GM12878 (cell line): ENCODE measurements at regions of chr5 and their contacts with region 1.

Region 1: DNA sequence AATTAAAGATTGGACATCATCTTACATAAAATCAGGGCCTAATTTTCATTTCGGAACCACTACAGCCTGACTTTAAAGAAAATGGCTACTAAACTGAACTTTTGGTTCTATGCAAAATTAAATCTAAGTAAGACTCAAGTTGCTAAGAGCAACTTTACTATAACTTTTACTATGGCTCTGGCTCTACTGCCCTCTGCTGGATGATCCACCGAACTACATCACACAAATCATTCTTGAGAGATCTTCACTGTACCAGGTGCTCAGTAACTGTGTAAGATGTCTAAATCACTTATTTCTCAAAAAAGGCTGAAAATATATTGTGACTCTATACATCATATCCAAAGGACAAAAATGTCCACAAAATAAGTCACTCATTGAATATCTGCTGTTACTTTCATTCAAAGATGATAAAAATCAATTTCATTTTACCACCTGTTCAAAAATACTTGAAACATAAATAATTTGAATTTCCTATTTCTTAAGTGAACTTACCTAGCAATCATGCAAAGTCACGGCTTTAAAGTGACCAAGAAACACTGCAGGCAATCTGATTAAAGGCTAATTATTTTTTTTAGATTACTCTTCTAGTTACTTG is 13.5 kb downstream of the MOCS2 start:
- DNase-seq: peak; percentile 11
- ATAC-seq: peak; percentile 87
- H3K4me3 ChIP-seq: no peak overlapping the region
- H3K27ac ChIP-seq: no peak overlapping the region
- H3K4me1 ChIP-seq: no peaks in the 10 kb centered on the region
- H3K27me3 ChIP-seq: no peaks in the 10 kb centered on the region
- CTCF ChIP-seq: peak; percentile 73 to 79 (median 76)
- EP300 ChIP-seq: no peak
- POLR2A ChIP-seq: no peak
- RAD21 ChIP-seq: peak; percentile 80

Region 2: GRCh38 chr5:52787600-52788504 is 308.2 kb before region 1 on chr5 and contains the starts of genes ITGA1 and PELO:
- CTCF ChIA-PET with region 1: interaction called, 3 read pairs
- POLR2A ChIA-PET with region 1: no interaction called
- RAD21 ChIA-PET with region 1: no interaction called
- SMC1A ChIA-PET with region 1: no interaction called
- in situ Hi-C with region 1: loop called (anchors 10 kb)
- intact Hi-C with region 1: loop called (anchors 5 kb)
- DNase-seq: no peak
- ATAC-seq: peak; percentile 88
- H3K4me3 ChIP-seq: peak within 1 kb of the TSS; percentile 76
- H3K27ac ChIP-seq: no peak within 1 kb of the TSS
- H3K4me1 ChIP-seq: no peaks in the 10 kb centered on the region; the same call in 1 of the 2 replicates
- H3K27me3 ChIP-seq: peaks cover 7 to 11% of the 10 kb centered on the region in 2 experiments; a peak in 3 of 4 replicates
- CTCF ChIP-seq: peak in 1 of 3 experiments; percentile 34; a peak in 2 of 6 replicates
- EP300 ChIP-seq: peak in 1 of 2 experiments; percentile 50; a peak in 1 of 4 replicates
- POLR2A ChIP-seq: no peak
- RAD21 ChIP-seq: no peak
- polyA plus RNA-seq, gene ITGA1: 0.02 to 0.04 TPM
- polyA plus RNA-seq, gene PELO: 6.0 to 6.3 TPM

Region 3: GRCh38 chr5:52799983-52800393 is 296.0 kb before region 1 on chr5:
- CTCF ChIA-PET with region 1: no interaction called
- POLR2A ChIA-PET with region 1: no interaction called
- RAD21 ChIA-PET with region 1: no interaction called
- SMC1A ChIA-PET with region 1: no interaction called
- in situ Hi-C with region 1: loop called (anchors 10 kb)
- intact Hi-C with region 1: no loop called
- DNase-seq: peak; percentile 83
- ATAC-seq: peak; percentile 93
- H3K4me3 ChIP-seq: peak overlapping the region; percentile 90
- H3K27ac ChIP-seq: peak overlapping the region; percentile 87
- H3K4me1 ChIP-seq: peaks cover 3% of the 10 kb centered on the region; the same call in 1 of the 2 replicates
- H3K27me3 ChIP-seq: no peaks in the 10 kb centered on the region
- CTCF ChIP-seq: no peak
- EP300 ChIP-seq: no peak
- POLR2A ChIP-seq: peak; percentile 77
- RAD21 ChIP-seq: no peak

Region 4: DNA sequence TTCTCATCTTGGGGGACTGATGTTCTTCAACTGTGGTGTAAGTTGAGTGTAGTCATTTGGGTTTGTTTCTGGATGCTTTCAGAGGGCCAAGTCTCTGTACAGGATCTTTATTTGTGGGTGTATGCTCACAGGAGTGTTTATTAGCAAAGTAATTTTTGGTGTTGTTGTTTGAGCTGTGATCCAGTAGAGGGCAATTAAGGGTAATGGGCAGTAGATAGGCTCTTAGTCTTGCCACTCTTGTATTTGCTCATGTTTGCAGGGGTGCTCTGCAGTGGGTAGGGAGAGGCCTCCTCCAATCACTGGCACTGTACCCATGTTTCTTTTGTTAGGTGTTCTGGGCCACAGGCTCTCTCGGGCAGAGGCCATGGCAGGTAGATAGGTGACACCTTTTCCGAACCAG is 152.7 kb before region 1 on chr5:
- CTCF ChIA-PET with region 1: interaction called, 127 read pairs
- POLR2A ChIA-PET with region 1: interaction called, 6 read pairs
- RAD21 ChIA-PET with region 1: interaction called, 49 read pairs
- SMC1A ChIA-PET with region 1: interaction called, 51 read pairs
- in situ Hi-C with region 1: loop called (anchors 5 kb)
- intact Hi-C with region 1: loop called (anchors 1 kb)
- DNase-seq: no peak
- ATAC-seq: peak; percentile 73
- H3K4me3 ChIP-seq: no peak overlapping the region
- H3K27ac ChIP-seq: no peak overlapping the region
- H3K4me1 ChIP-seq: no peaks in the 10 kb centered on the region
- H3K27me3 ChIP-seq: no peaks in the 10 kb centered on the region
- CTCF ChIP-seq: peak in 2 of 3 experiments; percentile 9 to 19; a peak in 2 of 6 replicates
- EP300 ChIP-seq: no peak
- POLR2A ChIP-seq: no peak
- RAD21 ChIP-seq: no peak

Region 5: GRCh38 chr5:53109443-53110127 is 13.6 kb after region 1 on chr5 and contains the start of gene MOCS2:
- CTCF ChIA-PET with region 1: interaction called, 38 read pairs
- POLR2A ChIA-PET with region 1: interaction called, 5 read pairs
- RAD21 ChIA-PET with region 1: interaction called, 5 read pairs
- SMC1A ChIA-PET with region 1: interaction called, 12 read pairs
- in situ Hi-C with region 1: no loop called
- intact Hi-C with region 1: no loop called
- DNase-seq: peak; percentile 64
- ATAC-seq: peak; percentile 99
- H3K4me3 ChIP-seq: peak within 1 kb of the TSS; percentile 68
- H3K27ac ChIP-seq: peak within 1 kb of the TSS; percentile 65
- H3K4me1 ChIP-seq: peaks cover 5% of the 10 kb centered on the region; the same call in 1 of the 2 replicates
- H3K27me3 ChIP-seq: no peaks in the 10 kb centered on the region
- CTCF ChIP-seq: no peak
- EP300 ChIP-seq: no peak
- POLR2A ChIP-seq: peak; percentile 97
- RAD21 ChIP-seq: no peak
- polyA plus RNA-seq, gene MOCS2: 23.4 to 24.1 TPM